MCF 10A (cell line): ENCODE measurements at regions of chr21 and their contacts with region 1.

Region 1: GRCh38 chr21:41612674-41613532 is 104.9 kb upstream of the TMPRSS2 start:
- DNase-seq: peak; percentile 98
- H3K4me3 Mint-ChIP-seq: no peak overlapping the region
- H3K27ac Mint-ChIP-seq: peak overlapping the region; percentile 80
- H3K4me1 Mint-ChIP-seq: peaks cover 29% of the 10 kb centered on the region
- H3K27me3 Mint-ChIP-seq: no peaks in the 10 kb centered on the region
- CTCF ChIP-seq: peak; percentile 91

Region 2: GRCh38 chr21:41641821-41642701 is 29.2 kb after region 1 on chr21:
- CTCF ChIA-PET with region 1: interaction called, 7 read pairs
- POLR2A ChIA-PET with region 1: interaction called, 12 read pairs
- intact Hi-C with region 1: no loop called
- DNase-seq: peak; percentile 80
- H3K4me3 Mint-ChIP-seq: no peak overlapping the region
- H3K27ac Mint-ChIP-seq: peak overlapping the region; percentile 93
- H3K4me1 Mint-ChIP-seq: peaks cover 50% of the 10 kb centered on the region
- H3K27me3 Mint-ChIP-seq: no peaks in the 10 kb centered on the region
- CTCF ChIP-seq: no peak

Region 3: DNA sequence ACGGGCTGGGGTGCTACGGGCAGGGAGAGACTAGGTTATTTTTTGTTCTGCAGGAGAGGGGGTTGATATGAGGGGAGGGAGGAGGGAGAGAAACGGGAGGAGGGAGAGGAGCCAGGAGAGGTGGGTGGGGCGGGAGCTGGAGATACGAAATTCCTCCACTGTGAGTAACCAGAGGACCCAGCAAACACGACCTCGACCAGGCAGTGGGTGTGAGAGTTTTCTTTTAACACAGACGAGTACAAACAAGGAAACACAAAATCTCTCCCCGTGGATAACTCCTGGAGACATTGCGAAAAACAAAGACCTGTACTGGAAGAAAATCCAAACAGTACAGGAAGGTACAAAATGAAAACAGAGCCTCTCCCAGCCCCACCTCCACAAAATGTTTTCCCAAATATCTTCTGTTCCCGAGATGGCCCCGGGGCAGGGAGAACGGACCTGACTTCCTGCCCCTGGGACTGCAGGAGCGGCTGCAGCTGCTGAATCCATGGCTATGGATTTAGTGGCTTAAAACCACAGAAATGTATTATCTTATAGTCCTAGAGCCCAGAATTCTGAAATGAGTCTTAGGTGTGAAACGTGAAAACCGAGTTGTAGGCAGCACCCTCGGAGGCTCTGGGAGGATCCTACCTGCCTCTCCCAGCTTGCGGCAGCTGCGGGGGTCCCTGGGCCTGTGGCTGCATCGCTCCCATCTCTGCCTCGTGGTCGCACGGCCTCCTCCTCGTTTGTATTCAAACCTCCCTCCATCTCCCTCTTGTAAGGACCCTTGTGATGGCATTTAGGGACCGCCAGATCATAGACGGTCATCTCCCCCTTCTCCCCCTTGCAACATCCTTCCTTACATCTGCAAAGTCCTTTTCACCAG is 71.7 kb after region 1 on chr21:
- CTCF ChIA-PET with region 1: interaction called, 23 read pairs
- POLR2A ChIA-PET with region 1: interaction called, 67 read pairs
- intact Hi-C with region 1: loop called (anchors 2 kb)
- DNase-seq: peak; percentile 72
- H3K4me3 Mint-ChIP-seq: peak overlapping the region; percentile 57
- H3K27ac Mint-ChIP-seq: peak overlapping the region; percentile 86
- H3K4me1 Mint-ChIP-seq: peaks cover 44% of the 10 kb centered on the region
- H3K27me3 Mint-ChIP-seq: no peaks in the 10 kb centered on the region
- CTCF ChIP-seq: no peak

Region 4: GRCh38 chr21:41752231-41752681 is 139.4 kb after region 1 on chr21:
- CTCF ChIA-PET with region 1: interaction called, 20 read pairs
- POLR2A ChIA-PET with region 1: interaction called, 21 read pairs
- intact Hi-C with region 1: no loop called
- DNase-seq: peak; percentile 84
- H3K4me3 Mint-ChIP-seq: peak overlapping the region; percentile 64
- H3K27ac Mint-ChIP-seq: peak overlapping the region; percentile 87
- H3K4me1 Mint-ChIP-seq: peaks cover 32% of the 10 kb centered on the region
- H3K27me3 Mint-ChIP-seq: no peaks in the 10 kb centered on the region
- CTCF ChIP-seq: no peak

Region 5: GRCh38 chr21:41783441-41784161 is 170.7 kb after region 1 on chr21:
- CTCF ChIA-PET with region 1: interaction called, 106 read pairs
- POLR2A ChIA-PET with region 1: interaction called, 52 read pairs
- intact Hi-C with region 1: loop called (anchors 1 kb)
- DNase-seq: peak; percentile 93
- H3K4me3 Mint-ChIP-seq: peak overlapping the region; percentile 7
- H3K27ac Mint-ChIP-seq: no peak overlapping the region
- H3K4me1 Mint-ChIP-seq: peaks cover 29% of the 10 kb centered on the region
- H3K27me3 Mint-ChIP-seq: no peaks in the 10 kb centered on the region
- CTCF ChIP-seq: no peak

Region 6: GRCh38 chr21:41879190-41879998 is 266.5 kb after region 1 on chr21 and contains the start of gene PRDM15:
- CTCF ChIA-PET with region 1: interaction called, 5 read pairs
- POLR2A ChIA-PET with region 1: interaction called, 10 read pairs
- intact Hi-C with region 1: loop called (anchors 2 kb)
- DNase-seq: peak; percentile 69
- H3K4me3 Mint-ChIP-seq: peak within 1 kb of the TSS; percentile 74
- H3K27ac Mint-ChIP-seq: peak within 1 kb of the TSS; percentile 94
- H3K4me1 Mint-ChIP-seq: peaks cover 8% of the 10 kb centered on the region
- H3K27me3 Mint-ChIP-seq: no peaks in the 10 kb centered on the region
- CTCF ChIP-seq: no peak
- total RNA-seq, gene PRDM15: 5.2 and 5.7 TPM in 2 replicates